T-cell (primary cell): ENCODE measurements at regions of chr15 and their contacts with region 1.

Region 1: GRCh38 chr15:55221090-55222011 is 24.6 kb upstream of the RSL24D1 start:
- DNase-seq: peak in 4 of 35 experiments; percentile 2 to 34 (median 6)
- ATAC-seq: peak in 3 of 4 experiments; percentile 17 to 43 (median 30)
- H3K4me3 ChIP-seq: no peak overlapping the region
- H3K4me3 Mint-ChIP-seq: peak overlapping the region in 1 of 3 donors; percentile 67
- H3K27ac ChIP-seq: peak overlapping the region; percentile 50
- H3K27ac Mint-ChIP-seq: peak overlapping the region; percentile 69 to 81
- H3K4me1 ChIP-seq: peaks cover 33 to 39% of the 10 kb centered on the region in 2 experiments
- H3K4me1 Mint-ChIP-seq: peaks cover 59 to 70% (median 61%) of the 10 kb centered on the region in 3 donors
- H3K27me3 ChIP-seq: no peaks in the 10 kb centered on the region
- H3K27me3 Mint-ChIP-seq: no peaks in the 10 kb centered on the region

Region 2: GRCh38 chr15:55074431-55074830 is 146.9 kb before region 1 on chr15:
- CTCF ChIA-PET with region 1: no interaction called
- POLR2A ChIA-PET with region 1: no interaction called
- DNase-seq: no peak
- ATAC-seq: no peak
- H3K4me3 ChIP-seq: no peak overlapping the region
- H3K4me3 Mint-ChIP-seq: no peak overlapping the region
- H3K27ac ChIP-seq: no peak overlapping the region
- H3K27ac Mint-ChIP-seq: no peak overlapping the region
- H3K4me1 ChIP-seq: peaks cover 0 to 8% of the 10 kb centered on the region in 2 experiments
- H3K4me1 Mint-ChIP-seq: peaks cover 20 to 26% (median 23%) of the 10 kb centered on the region in 3 donors
- H3K27me3 ChIP-seq: no peaks in the 10 kb centered on the region
- H3K27me3 Mint-ChIP-seq: no peaks in the 10 kb centered on the region

Region 3: DNA sequence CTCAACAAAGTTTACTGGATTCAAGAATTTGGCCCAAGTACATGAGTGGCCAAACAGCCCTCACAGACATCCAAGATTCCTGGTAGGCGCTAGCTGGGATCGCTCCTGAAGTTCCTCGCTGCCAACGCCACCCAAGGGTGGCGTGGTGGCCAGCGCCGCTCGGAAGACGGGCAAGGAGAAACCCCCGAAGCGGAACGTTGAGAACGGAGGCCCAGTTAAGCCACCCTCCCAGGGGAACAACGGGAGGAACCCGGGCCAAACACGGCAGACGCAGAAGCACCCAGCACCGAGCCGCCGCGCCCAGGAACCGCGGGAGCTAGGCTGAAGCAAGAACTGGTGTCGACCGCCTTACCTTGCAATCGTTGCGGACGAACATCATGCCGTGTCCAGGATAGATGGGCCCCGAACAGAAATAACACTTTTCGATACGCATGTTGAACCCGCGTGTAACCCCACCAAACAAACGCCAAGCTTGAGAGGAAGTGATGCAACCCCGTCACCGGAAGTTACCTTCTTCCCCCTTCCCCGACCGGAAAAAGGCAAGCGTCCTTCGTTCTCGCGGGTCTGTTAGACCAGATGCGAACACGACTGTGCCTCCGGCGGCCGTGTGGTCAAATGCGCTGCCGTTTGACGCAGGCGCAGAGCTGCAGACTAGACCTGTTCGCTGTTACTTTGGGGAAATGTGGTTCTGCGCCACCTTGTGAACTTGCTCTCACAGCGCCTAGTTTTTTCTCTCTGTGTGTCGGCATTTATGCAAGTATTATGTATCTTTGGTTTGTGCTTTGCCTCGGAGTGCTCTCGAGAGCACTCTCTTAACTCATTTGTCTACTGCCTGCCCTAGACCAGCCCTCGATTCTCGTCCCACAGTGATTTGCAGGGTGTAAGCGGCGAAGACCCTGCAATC is 24.6 kb before region 1 on chr15 and contains the start of gene RSL24D1:
- CTCF ChIA-PET with region 1: interaction called, 4 to 12 read pairs
- POLR2A ChIA-PET with region 1: no interaction called
- DNase-seq: peak; percentile 88 to 99 (median 97)
- ATAC-seq: peak; percentile 97 to 98 (median 98)
- H3K4me3 ChIP-seq: peak within 1 kb of the TSS; percentile 60 to 99
- H3K4me3 Mint-ChIP-seq: no peak within 1 kb of the TSS
- H3K27ac ChIP-seq: peak within 1 kb of the TSS; percentile 78
- H3K27ac Mint-ChIP-seq: no peak within 1 kb of the TSS
- H3K4me1 ChIP-seq: peaks cover 6 to 39% of the 10 kb centered on the region in 2 experiments
- H3K4me1 Mint-ChIP-seq: peaks cover 0 to 28% (median 21%) of the 10 kb centered on the region in 3 donors
- H3K27me3 ChIP-seq: no peaks in the 10 kb centered on the region
- H3K27me3 Mint-ChIP-seq: no peaks in the 10 kb centered on the region
- total RNA-seq, gene RSL24D1: 88.9 to 133 (median 108) TPM

Region 4: DNA sequence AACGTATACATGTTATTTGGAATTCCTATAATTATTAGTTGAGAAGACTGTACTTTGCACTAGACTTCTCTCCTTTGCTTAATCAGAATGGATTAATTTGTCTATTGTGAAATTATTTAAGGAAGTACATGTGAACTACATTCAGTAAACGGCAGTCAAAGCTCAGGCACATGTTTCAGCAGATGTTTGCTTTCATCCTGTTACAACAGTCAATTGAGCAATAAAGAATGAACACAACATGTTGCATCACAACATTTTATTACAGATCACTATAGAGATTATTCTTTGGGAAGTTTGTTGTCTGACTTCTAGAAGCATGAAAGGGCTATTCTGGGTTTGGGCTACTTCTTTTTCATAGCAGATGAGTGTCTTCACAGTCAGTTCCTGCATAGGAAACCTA is 29.0 kb after region 1 on chr15:
- CTCF ChIA-PET with region 1: interaction called in 1 of 2 experiments, 10 read pairs
- POLR2A ChIA-PET with region 1: no interaction called
- DNase-seq: no peak
- ATAC-seq: peak in 1 of 4 experiments; percentile 25
- H3K4me3 ChIP-seq: no peak overlapping the region
- H3K4me3 Mint-ChIP-seq: peak overlapping the region in 1 of 3 donors; percentile 23
- H3K27ac ChIP-seq: peak overlapping the region; percentile 51
- H3K27ac Mint-ChIP-seq: peak overlapping the region; percentile 71 to 77
- H3K4me1 ChIP-seq: peaks cover 21 to 49% of the 10 kb centered on the region in 2 experiments
- H3K4me1 Mint-ChIP-seq: peaks cover 52 to 73% (median 64%) of the 10 kb centered on the region in 3 donors
- H3K27me3 ChIP-seq: no peaks in the 10 kb centered on the region
- H3K27me3 Mint-ChIP-seq: no peaks in the 10 kb centered on the region

Region 5: GRCh38 chr15:55267401-55268175 is 46.2 kb after region 1 on chr15:
- CTCF ChIA-PET with region 1: interaction called, 6 to 18 read pairs
- POLR2A ChIA-PET with region 1: interaction called in 1 of 2 experiments, 3 read pairs
- DNase-seq: peak; percentile 49 to 87 (median 77)
- ATAC-seq: peak; percentile 91 to 96 (median 95)
- H3K4me3 ChIP-seq: peak overlapping the region; percentile 33 to 35
- H3K4me3 Mint-ChIP-seq: peak overlapping the region; percentile 63 to 74 (median 73)
- H3K27ac ChIP-seq: peak overlapping the region; percentile 93
- H3K27ac Mint-ChIP-seq: peak overlapping the region; percentile 94 to 98
- H3K4me1 ChIP-seq: peaks cover 14 to 63% of the 10 kb centered on the region in 2 experiments
- H3K4me1 Mint-ChIP-seq: peaks cover 71 to 79% (median 72%) of the 10 kb centered on the region in 3 donors
- H3K27me3 ChIP-seq: no peaks in the 10 kb centered on the region
- H3K27me3 Mint-ChIP-seq: no peaks in the 10 kb centered on the region

Region 6: DNA sequence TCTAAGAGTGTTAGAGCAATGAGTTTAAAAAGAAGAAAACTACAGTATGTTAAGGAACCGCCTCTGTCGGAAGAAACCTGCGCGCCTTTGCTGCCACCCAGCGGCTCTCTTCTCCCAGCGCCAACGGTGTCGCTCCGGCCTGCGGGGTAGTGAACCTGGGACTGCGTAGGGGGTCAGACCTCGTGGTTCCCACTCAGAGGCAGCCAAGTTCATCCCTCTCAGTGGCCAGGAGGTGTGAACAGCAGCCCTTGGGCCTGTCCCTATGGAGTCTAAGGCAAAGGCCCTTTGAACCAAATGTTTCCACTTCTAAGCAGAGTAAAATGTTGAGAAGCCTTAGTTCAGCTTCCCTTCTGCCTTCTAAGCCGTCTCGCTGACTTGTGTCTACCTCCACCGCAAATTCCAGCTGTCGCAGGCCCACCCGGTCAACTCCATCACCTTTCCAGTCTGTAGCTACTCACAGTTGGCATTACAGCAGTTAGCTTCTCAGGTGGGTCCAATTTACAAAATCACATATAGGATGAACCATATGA is 69.2 kb after region 1 on chr15:
- CTCF ChIA-PET with region 1: interaction called, 42 to 51 read pairs
- POLR2A ChIA-PET with region 1: interaction called in 1 of 2 experiments, 7 read pairs
- DNase-seq: peak; percentile 61 to 90 (median 82)
- ATAC-seq: peak; percentile 76 to 81 (median 81)
- H3K4me3 ChIP-seq: peak overlapping the region; percentile 92 to 97
- H3K4me3 Mint-ChIP-seq: peak overlapping the region; percentile 88 to 93 (median 92)
- H3K27ac ChIP-seq: peak overlapping the region; percentile 95
- H3K27ac Mint-ChIP-seq: peak overlapping the region; percentile 78 to 90
- H3K4me1 ChIP-seq: peaks cover 5 to 26% of the 10 kb centered on the region in 2 experiments
- H3K4me1 Mint-ChIP-seq: peaks cover 35 to 36% (median 35%) of the 10 kb centered on the region in 3 donors
- H3K27me3 ChIP-seq: no peaks in the 10 kb centered on the region
- H3K27me3 Mint-ChIP-seq: no peaks in the 10 kb centered on the region

Region 7: DNA sequence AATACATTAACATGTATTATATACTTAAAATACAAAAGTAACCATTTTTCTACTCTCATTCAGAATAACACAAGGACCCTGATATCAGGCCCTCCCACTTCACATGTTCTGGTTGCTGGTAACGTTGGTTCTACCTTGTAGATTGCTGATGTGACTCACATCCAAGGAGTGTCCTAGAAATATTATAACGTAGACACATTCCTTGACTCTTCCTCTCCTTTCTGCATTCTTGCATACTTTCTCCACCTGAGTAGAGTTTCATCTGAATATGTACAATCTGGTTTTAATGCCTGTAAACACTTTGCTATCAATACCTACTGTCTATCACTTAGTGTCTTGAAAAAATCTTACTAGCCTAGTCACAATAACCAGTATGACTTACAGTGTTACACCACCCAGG is 807.1 kb after region 1 on chr15:
- CTCF ChIA-PET with region 1: no interaction called
- POLR2A ChIA-PET with region 1: no interaction called
- DNase-seq: no peak
- ATAC-seq: no peak
- H3K4me3 ChIP-seq: no peak overlapping the region
- H3K4me3 Mint-ChIP-seq: no peak overlapping the region
- H3K27ac ChIP-seq: no peak overlapping the region
- H3K27ac Mint-ChIP-seq: no peak overlapping the region
- H3K4me1 ChIP-seq: no peaks in the 10 kb centered on the region
- H3K4me1 Mint-ChIP-seq: no peaks in the 10 kb centered on the region
- H3K27me3 ChIP-seq: peaks cover 0 to 3% of the 10 kb centered on the region in 2 experiments
- H3K27me3 Mint-ChIP-seq: peaks cover 0 to 3% of the 10 kb centered on the region in 2 donors